Endothelial cell of umbilical vein (primary cell): ENCODE measurements at regions of chr2 and their contacts with region 1.

Region 1: DNA sequence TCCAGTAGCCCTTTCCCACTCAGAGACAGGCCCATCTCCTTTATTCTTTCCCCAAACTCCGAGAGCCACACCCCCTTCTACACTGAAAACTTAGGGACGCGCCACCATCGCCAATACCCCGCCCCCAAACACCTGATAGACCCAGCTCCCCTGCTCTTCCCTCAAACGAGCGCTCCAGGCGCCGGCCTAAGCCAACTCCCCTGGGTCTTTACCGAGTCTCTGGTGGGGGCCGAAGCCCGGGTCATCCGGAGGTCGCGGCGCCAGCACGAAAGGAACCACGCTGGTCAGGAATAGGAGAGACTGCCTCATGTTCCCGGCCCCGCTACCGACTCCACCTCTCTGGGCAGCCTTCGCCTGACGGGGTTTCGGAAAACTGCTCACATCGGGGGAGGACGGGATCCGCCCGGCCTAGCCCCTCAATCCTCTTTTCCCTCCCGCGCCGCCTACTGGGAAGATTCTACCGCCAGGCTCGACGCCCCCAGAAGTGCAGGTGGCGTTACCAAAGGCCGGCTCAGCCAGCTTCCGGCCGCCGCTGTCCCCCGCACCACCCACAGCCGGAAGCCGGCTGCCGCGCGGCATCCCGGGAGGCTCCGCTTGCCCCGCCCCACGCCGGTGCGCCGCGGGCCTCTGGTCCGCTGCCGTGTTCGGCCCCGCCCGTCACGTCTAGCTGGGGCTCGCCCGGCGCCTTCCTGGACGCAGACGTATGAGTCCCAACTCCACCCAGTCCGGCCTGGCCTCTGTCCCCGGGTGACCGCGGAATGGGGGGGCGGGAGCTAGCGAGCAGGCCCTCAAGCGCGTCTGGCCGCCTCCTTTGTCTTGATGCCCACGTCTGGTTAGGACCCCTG is at the start of gene ADAM17:
- DNase-seq: peak; percentile 97
- H3K4me3 ChIP-seq: peak within 1 kb of the TSS; percentile 43 to 89 (median 81)
- H3K27ac ChIP-seq: peak within 1 kb of the TSS; percentile 84
- H3K4me1 ChIP-seq: peaks cover 28% of the 10 kb centered on the region
- H3K27me3 ChIP-seq: no peaks in the 10 kb centered on the region
- CTCF ChIP-seq: peak; percentile 39
- POLR2A ChIP-seq: peak; percentile 89
- total RNA-seq, gene ADAM17: 52.9 and 57.1 TPM in 2 replicates

Region 2: GRCh38 chr2:8277921-8278571 is 1277.5 kb before region 1 on chr2:
- CTCF ChIA-PET with region 1: no interaction called
- POLR2A ChIA-PET with region 1: no interaction called
- dilution Hi-C with region 1: no loop called
- intact Hi-C with region 1: no loop called
- DNase-seq: no peak
- H3K4me3 ChIP-seq: no peak overlapping the region
- H3K27ac ChIP-seq: no peak overlapping the region
- H3K4me1 ChIP-seq: no peaks in the 10 kb centered on the region
- H3K27me3 ChIP-seq: no peaks in the 10 kb centered on the region
- CTCF ChIP-seq: no peak
- POLR2A ChIP-seq: no peak

Region 3: GRCh38 chr2:9256570-9257043 is 298.9 kb before region 1 on chr2:
- CTCF ChIA-PET with region 1: no interaction called
- POLR2A ChIA-PET with region 1: no interaction called
- dilution Hi-C with region 1: no loop called
- intact Hi-C with region 1: no loop called
- DNase-seq: peak; percentile 58
- H3K4me3 ChIP-seq: no peak overlapping the region
- H3K27ac ChIP-seq: no peak overlapping the region
- H3K4me1 ChIP-seq: peaks cover 65% of the 10 kb centered on the region
- H3K27me3 ChIP-seq: no peaks in the 10 kb centered on the region
- CTCF ChIP-seq: no peak
- POLR2A ChIP-seq: no peak

Region 4: GRCh38 chr2:9474361-9474967 is 81.1 kb before region 1 on chr2 and contains the start of gene IAH1:
- CTCF ChIA-PET with region 1: interaction called, 5 read pairs
- POLR2A ChIA-PET with region 1: no interaction called
- dilution Hi-C with region 1: no loop called
- intact Hi-C with region 1: loop called (anchors 2 kb)
- DNase-seq: peak; percentile 60
- H3K4me3 ChIP-seq: peak within 1 kb of the TSS; percentile 54 to 86 (median 73)
- H3K27ac ChIP-seq: peak within 1 kb of the TSS; percentile 70
- H3K4me1 ChIP-seq: peaks cover 7% of the 10 kb centered on the region
- H3K27me3 ChIP-seq: no peaks in the 10 kb centered on the region
- CTCF ChIP-seq: no peak
- POLR2A ChIP-seq: peak; percentile 66
- total RNA-seq, gene IAH1: 39.9 and 44.0 TPM in 2 replicates

Region 5: DNA sequence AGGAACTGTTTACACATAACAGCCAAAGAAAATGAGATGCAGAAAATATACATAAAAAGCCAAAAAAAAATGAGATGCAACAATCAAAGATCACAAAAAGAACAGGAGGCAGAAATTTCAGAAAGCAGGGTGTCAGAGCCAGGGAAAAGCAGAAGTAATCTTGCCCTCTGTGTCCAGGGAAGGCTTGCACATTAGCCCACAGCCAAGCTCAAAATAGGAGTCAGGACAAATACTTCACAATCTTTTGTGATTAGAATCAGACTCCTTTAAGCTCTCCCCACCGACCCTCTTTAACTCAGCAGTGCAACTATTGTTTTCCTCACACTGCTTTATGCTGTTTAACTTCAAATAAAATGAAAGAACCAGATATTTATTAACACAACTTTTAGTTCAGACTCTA is 46.6 kb before region 1 on chr2:
- CTCF ChIA-PET with region 1: interaction called, 3 read pairs
- POLR2A ChIA-PET with region 1: no interaction called
- dilution Hi-C with region 1: no loop called
- intact Hi-C with region 1: loop called (anchors 5 kb)
- DNase-seq: no peak
- H3K4me3 ChIP-seq: no peak overlapping the region
- H3K27ac ChIP-seq: no peak overlapping the region
- H3K4me1 ChIP-seq: no peaks in the 10 kb centered on the region
- H3K27me3 ChIP-seq: no peaks in the 10 kb centered on the region
- CTCF ChIP-seq: no peak
- POLR2A ChIP-seq: no peak

Region 6: GRCh38 chr2:9538000-9538507 is 17.5 kb before region 1 on chr2:
- CTCF ChIA-PET with region 1: interaction called, 21 read pairs
- POLR2A ChIA-PET with region 1: no interaction called
- dilution Hi-C with region 1: no loop called
- intact Hi-C with region 1: loop called (anchors 2 kb)
- DNase-seq: peak; percentile 71
- H3K4me3 ChIP-seq: no peak overlapping the region
- H3K27ac ChIP-seq: no peak overlapping the region
- H3K4me1 ChIP-seq: peaks cover 12% of the 10 kb centered on the region
- H3K27me3 ChIP-seq: no peaks in the 10 kb centered on the region
- CTCF ChIP-seq: no peak
- POLR2A ChIP-seq: no peak

Region 7: DNA sequence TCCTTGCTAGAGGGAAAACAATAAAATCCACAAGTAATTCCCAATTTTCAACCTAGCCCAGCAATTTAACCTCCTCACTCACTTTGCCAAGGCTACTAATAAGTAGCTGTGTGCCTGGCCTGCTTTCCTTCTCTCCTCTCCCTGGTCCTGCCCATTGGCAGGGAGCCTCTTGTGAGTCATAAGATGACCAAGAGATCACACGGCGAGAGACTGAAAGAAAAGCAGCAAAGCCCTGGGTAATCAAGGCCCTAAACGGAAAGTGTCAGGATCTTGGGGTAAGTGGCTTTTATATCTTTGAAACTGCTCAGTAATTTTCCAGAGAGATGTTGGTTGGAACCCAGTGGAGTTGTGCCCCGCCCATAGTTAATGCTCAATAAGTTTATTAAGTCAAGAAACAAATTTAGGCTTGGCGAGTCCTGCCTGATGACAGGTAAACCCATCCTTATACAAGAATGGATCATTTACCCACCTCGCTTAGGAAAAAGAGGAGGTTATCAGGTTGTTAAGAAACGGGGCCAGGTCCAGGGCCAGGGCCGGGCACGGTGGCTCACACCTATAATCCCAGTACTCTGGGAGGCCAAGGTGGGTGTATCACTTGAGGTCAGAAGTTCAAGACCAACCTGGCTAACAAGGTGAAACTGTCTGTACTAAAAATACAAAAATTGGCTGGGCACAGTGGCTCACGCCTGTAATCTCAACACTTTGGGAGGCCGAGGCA is 10.1 kb after region 1 on chr2:
- CTCF ChIA-PET with region 1: interaction called, 19 read pairs
- POLR2A ChIA-PET with region 1: interaction called, 7 read pairs
- dilution Hi-C with region 1: no loop called
- intact Hi-C with region 1: loop called (anchors 1 kb)
- DNase-seq: peak; percentile 94
- H3K4me3 ChIP-seq: no peak overlapping the region
- H3K27ac ChIP-seq: peak overlapping the region; percentile 44
- H3K4me1 ChIP-seq: peaks cover 10% of the 10 kb centered on the region
- H3K27me3 ChIP-seq: no peaks in the 10 kb centered on the region
- CTCF ChIP-seq: no peak
- POLR2A ChIP-seq: no peak

Region 8: DNA sequence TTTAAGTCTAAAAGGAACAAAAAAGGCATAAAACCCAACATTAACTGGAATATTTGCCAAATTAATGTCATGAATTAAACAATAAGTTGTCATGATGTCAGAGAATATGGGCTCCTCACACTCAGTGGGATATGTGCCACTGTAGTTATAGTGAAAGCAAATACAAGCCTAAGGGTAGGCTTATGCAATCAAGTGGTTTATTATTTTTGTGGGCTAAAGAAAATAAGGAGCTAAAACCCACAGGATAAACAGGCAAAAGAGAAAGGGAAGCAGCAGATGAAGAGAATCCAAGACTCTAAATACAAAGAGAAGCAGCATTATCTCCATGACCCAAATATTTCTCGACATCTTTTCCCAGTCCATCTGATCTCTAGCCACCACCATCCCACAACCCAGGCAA is 57.8 kb after region 1 on chr2:
- CTCF ChIA-PET with region 1: interaction called, 3 read pairs
- POLR2A ChIA-PET with region 1: interaction called, 5 read pairs
- dilution Hi-C with region 1: no loop called
- intact Hi-C with region 1: loop called (anchors 2 kb)
- DNase-seq: no peak
- H3K4me3 ChIP-seq: no peak overlapping the region
- H3K27ac ChIP-seq: no peak overlapping the region
- H3K4me1 ChIP-seq: peaks cover 8% of the 10 kb centered on the region
- H3K27me3 ChIP-seq: no peaks in the 10 kb centered on the region
- CTCF ChIP-seq: no peak
- POLR2A ChIP-seq: no peak

Region 9: GRCh38 chr2:10225291-10226037 is 669.9 kb after region 1 on chr2:
- CTCF ChIA-PET with region 1: no interaction called
- POLR2A ChIA-PET with region 1: no interaction called
- dilution Hi-C with region 1: no loop called
- intact Hi-C with region 1: no loop called
- DNase-seq: no peak
- H3K4me3 ChIP-seq: no peak overlapping the region
- H3K27ac ChIP-seq: no peak overlapping the region
- H3K4me1 ChIP-seq: no peaks in the 10 kb centered on the region
- H3K27me3 ChIP-seq: no peaks in the 10 kb centered on the region
- CTCF ChIP-seq: no peak
- POLR2A ChIP-seq: no peak